OCI-LY7 (cell line): ENCODE measurements at regions of chr16 and their contacts with region 1.

Region 1: DNA sequence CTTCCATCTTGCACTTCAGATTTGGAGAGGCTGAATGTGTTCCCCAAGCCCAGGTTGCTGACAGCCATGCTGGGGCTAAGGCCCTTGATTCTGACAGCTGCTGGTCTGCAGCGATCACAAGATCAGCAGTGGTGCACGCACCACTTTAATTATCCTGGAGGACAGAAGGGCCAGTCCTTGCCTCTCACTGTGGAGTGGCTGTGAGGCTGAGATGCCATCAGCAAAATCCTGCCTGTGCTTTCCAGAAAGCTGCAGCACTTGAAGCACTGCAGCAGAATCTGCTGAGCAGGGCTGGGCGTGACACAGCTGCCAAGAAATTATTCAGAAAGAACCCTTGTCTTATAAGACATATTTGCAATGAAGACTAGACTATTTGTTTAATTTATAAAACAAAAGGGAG is 37.1 kb downstream of the NUP93 start:
- DNase-seq: no peak
- H3K4me3 ChIP-seq: no peak overlapping the region
- H3K27ac ChIP-seq: no peak overlapping the region
- H3K4me1 ChIP-seq: no peaks in the 10 kb centered on the region
- CTCF ChIP-seq: no peak

Region 2: GRCh38 chr16:56777482-56777881 is 10.5 kb after region 1 on chr16:
- CTCF ChIA-PET with region 1: no interaction called
- POLR2A ChIA-PET with region 1: interaction called, 12 read pairs
- intact Hi-C with region 1: no loop called
- DNase-seq: no peak
- H3K4me3 ChIP-seq: no peak overlapping the region
- H3K27ac ChIP-seq: no peak overlapping the region
- H3K4me1 ChIP-seq: no peaks in the 10 kb centered on the region
- CTCF ChIP-seq: no peak